ENCODE measurements at regions of chr5 and their contacts with region 1.

Region 1: GRCh38 chr5:132820162-132820754 is 7.2 kb downstream of the SOWAHA start:
- DNase-seq: peak; percentile 82
- ATAC-seq: peak; percentile 83
- H3K4me3 ChIP-seq: no peak overlapping the region
- H3K27ac ChIP-seq: no peak overlapping the region
- H3K4me1 ChIP-seq: no peaks in the 10 kb centered on the region
- H3K27me3 ChIP-seq: no peaks in the 10 kb centered on the region
- CTCF ChIP-seq: peak; percentile 87

Region 2: GRCh38 chr5:132369474-132370180 is 450.6 kb before region 1 on chr5 and contains the start of gene SLC22A5:
- CTCF ChIA-PET with region 1: no interaction called
- POLR2A ChIA-PET with region 1: no interaction called
- intact Hi-C with region 1: no loop called
- DNase-seq: peak; percentile 76
- ATAC-seq: peak; percentile 85
- H3K4me3 ChIP-seq: peak within 1 kb of the TSS; percentile 97
- H3K27ac ChIP-seq: peak within 1 kb of the TSS; percentile 51
- H3K4me1 ChIP-seq: peaks cover 42% of the 10 kb centered on the region
- H3K27me3 ChIP-seq: no peaks in the 10 kb centered on the region
- CTCF ChIP-seq: no peak
- total RNA-seq, gene SLC22A5: 8.2 and 21.8 TPM in 2 replicates

Region 3: DNA sequence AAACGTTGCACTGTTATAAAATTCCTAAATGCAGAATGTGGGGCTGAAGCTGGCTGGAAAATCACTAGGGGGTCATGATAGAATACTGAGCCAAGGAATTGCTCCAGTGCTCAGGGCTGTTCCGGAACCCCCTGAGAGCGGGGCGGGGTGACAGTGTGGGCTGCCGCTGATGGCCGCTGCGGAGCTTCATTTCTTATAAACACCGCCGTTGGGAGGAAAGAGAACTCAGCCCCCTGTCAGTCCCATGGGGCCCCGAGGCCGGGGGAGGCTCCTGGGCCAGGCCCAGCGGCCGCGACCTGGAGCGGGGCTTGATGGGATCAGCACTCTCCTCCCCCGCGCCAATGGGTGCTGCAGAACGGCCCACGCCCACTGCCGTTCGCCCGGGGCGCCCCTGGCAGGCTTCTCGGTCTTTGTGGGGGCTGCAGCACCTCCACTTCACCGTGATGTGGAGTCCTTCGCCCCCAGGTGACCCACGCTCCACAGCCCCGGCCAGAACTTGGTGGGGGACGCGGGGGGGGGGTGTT is 324.5 kb before region 1 on chr5:
- CTCF ChIA-PET with region 1: no interaction called
- POLR2A ChIA-PET with region 1: interaction called, 12 read pairs
- intact Hi-C with region 1: no loop called
- DNase-seq: peak; percentile 72
- ATAC-seq: peak; percentile 39
- H3K4me3 ChIP-seq: peak overlapping the region; percentile 85
- H3K27ac ChIP-seq: peak overlapping the region; percentile 84
- H3K4me1 ChIP-seq: peaks cover 51% of the 10 kb centered on the region
- H3K27me3 ChIP-seq: no peaks in the 10 kb centered on the region
- CTCF ChIP-seq: no peak

Region 4: GRCh38 chr5:132526290-132526973 is 293.8 kb before region 1 on chr5:
- CTCF ChIA-PET with region 1: interaction called, 3 read pairs
- POLR2A ChIA-PET with region 1: no interaction called
- intact Hi-C with region 1: loop called (anchors 5 kb)
- DNase-seq: peak; percentile 79
- ATAC-seq: peak; percentile 88
- H3K4me3 ChIP-seq: peak overlapping the region; percentile 49; the same call in 1 of the 2 replicates
- H3K27ac ChIP-seq: no peak overlapping the region
- H3K4me1 ChIP-seq: no peaks in the 10 kb centered on the region
- H3K27me3 ChIP-seq: no peaks in the 10 kb centered on the region
- CTCF ChIP-seq: peak; percentile 94

Region 5: DNA sequence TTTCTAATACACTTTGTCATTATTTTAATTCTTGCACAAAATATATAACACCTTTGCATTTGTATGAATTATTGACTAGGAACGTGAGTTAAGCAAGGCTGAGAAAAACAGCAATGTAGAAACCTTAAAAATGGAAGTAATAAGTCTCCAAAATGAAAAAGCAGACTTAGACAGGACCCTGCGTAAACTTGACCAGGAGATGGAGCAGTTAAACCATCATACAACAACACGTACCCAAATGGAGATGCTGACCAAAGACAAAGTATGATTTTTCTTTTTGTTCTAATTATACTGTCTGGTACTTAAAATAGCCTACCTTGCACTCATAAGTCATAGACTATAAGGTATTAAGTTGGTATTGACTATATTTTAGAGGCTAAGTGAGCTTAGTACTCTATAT is 229.1 kb before region 1 on chr5:
- CTCF ChIA-PET with region 1: interaction called, 4 read pairs
- POLR2A ChIA-PET with region 1: no interaction called
- intact Hi-C with region 1: loop called (anchors 1 kb)
- DNase-seq: peak; percentile 33
- ATAC-seq: peak; percentile 59
- H3K4me3 ChIP-seq: no peak overlapping the region
- H3K27ac ChIP-seq: no peak overlapping the region
- H3K4me1 ChIP-seq: no peaks in the 10 kb centered on the region
- H3K27me3 ChIP-seq: no peaks in the 10 kb centered on the region
- CTCF ChIP-seq: peak; percentile 63

Region 6: GRCh38 chr5:132754947-132755346 is 65.3 kb before region 1 on chr5:
- CTCF ChIA-PET with region 1: interaction called, 12 read pairs
- POLR2A ChIA-PET with region 1: no interaction called
- intact Hi-C with region 1: loop called (anchors 5 kb)
- DNase-seq: peak; percentile 3
- ATAC-seq: peak; percentile 57
- H3K4me3 ChIP-seq: no peak overlapping the region
- H3K27ac ChIP-seq: no peak overlapping the region
- H3K4me1 ChIP-seq: no peaks in the 10 kb centered on the region
- H3K27me3 ChIP-seq: no peaks in the 10 kb centered on the region
- CTCF ChIP-seq: 0 out of 2 replicates have a peak, but pooled peaks have one; percentile 23

Region 7: GRCh38 chr5:132777209-132778069 is 42.8 kb before region 1 on chr5 and contains the start of gene SEPTIN8:
- CTCF ChIA-PET with region 1: interaction called, 3 read pairs
- POLR2A ChIA-PET with region 1: no interaction called
- intact Hi-C with region 1: loop called (anchors 5 kb)
- DNase-seq: peak; percentile 42
- ATAC-seq: peak; percentile 56
- H3K4me3 ChIP-seq: peak within 1 kb of the TSS; percentile 80
- H3K27ac ChIP-seq: no peak within 1 kb of the TSS
- H3K4me1 ChIP-seq: peaks cover 21% of the 10 kb centered on the region
- H3K27me3 ChIP-seq: no peaks in the 10 kb centered on the region
- CTCF ChIP-seq: no peak
- total RNA-seq, gene SEPTIN8: 21.9 and 29.4 TPM in 2 replicates